AG04449 (cell line): ENCODE measurements at regions of chr4 and their contacts with region 1.

Region 1: DNA sequence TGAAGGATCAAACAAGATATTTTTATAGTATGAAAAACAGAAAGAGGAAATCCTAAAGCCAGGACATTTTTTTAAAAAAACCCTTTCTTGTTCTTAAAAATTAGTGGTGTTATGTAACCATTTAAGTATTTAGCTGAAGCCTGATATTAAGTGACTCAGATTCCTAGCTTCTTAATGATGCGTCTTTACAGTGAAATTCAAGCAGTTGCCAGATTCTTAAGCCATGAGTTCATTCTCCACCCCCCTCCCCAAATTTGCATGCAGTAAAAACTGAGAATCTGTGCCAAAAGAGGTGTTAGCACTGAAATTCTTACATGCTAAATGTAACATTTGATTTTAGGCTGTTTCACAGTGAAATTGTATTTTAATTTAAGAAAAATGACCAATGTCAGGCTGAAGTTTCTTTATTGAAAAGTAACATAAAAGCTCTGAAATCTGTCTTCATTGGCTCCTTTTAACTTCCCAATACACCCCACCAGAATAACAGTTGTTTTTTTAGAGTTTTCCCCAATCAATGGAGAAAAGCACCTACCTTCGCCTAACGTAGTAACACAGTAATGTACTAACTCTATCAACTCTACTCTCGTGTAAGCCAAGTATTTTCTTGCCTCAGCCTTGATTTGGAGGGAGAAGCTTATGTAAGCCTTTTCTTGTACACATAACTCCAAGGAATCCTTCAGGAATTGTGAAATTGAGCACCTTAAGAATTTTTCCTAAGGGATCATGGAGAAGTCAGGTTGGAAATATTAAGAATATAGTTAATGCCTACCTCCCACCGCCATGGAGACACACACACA is 181.0 kb downstream of the RAPGEF2 start:
- DNase-seq: peak; percentile 73
- H3K4me3 ChIP-seq: no peak overlapping the region
- CTCF ChIP-seq: no peak

Region 2: DNA sequence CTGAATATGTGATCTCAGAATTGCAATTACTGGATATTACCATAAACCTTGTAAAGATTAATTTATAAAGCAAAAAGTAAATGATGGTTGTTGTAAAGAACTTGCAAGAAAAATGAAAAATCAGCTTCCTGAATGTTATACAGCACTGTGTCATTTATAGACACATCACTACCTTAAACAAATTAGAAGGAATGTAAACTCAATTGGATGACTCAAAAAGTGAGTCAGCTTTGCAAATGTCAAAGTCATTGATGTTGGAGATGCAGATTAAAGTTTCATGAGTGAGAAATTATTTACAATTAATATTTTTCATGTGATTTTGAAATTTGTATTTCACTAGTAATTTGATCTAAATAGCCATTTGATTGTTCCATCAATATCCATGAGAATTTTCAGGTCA is 12.2 kb after region 1 on chr4:
- CTCF ChIA-PET with region 1: interaction called, 13 read pairs
- POLR2A ChIA-PET with region 1: no interaction called
- DNase-seq: no peak
- H3K4me3 ChIP-seq: no peak overlapping the region
- CTCF ChIP-seq: no peak